ENCODE measurements at regions of chr2 and their contacts with region 1.

Region 1: GRCh38 chr2:64523666-64524603 is at the start of gene AFTPH:
- DNase-seq: peak; percentile 100
- H3K4me3 ChIP-seq: peak within 1 kb of the TSS; percentile 93 to 98 (median 97)
- H3K27ac ChIP-seq: peak within 1 kb of the TSS; percentile 82
- H3K4me1 ChIP-seq: peaks cover 12% of the 10 kb centered on the region
- H3K27me3 ChIP-seq: peaks cover 7 to 8% of the 10 kb centered on the region in 2 experiments
- CTCF ChIP-seq: no peak
- POLR2A ChIP-seq: peak; percentile 46
- total RNA-seq, gene AFTPH: 15.3 and 16.7 TPM in 2 replicates

Region 2: DNA sequence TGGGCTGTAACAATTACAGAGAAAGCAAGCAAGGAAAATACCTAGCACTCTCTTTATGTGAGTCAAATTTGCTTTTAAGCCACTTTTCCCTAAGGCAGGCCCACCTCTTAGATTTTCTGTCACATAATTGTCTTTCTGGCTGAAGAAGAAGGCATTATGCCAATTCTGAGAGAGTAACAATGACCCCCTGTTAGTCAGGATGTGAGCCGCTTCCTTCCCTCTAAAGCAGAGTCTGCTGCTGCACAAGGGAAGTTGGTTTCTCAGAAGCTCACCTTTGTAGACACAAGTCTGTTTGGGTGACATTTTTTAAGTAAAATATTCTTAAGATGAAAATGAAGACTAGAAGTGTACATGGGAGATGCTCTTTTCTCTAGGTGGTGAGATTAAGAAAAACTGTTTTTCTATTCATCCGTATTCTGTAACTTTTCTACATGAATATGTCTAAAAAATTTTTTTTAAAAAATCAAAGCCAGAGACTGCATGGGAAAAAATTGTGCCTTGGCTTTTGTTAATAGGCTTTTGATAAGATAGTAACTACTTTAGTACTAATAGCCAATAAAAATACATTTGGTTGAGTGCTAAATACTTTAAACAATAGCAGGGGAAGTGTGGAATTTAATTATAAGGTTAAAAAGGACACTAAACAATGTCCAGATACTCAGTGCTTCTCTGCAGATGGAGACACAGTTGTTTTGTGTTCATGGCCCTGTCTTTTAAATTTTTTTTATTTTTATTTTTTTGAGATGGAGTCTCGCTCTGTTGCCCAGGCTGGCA is 471.3 kb before region 1 on chr2:
- CTCF ChIA-PET with region 1: interaction called, 10 read pairs
- POLR2A ChIA-PET with region 1: no interaction called
- dilution Hi-C with region 1: no loop called
- intact Hi-C with region 1: loop called (anchors 10 kb)
- DNase-seq: peak; percentile 94
- H3K4me3 ChIP-seq: peak overlapping the region in 1 of 3 experiments; percentile 20
- H3K27ac ChIP-seq: peak overlapping the region; percentile 96
- H3K4me1 ChIP-seq: peaks cover 28% of the 10 kb centered on the region
- H3K27me3 ChIP-seq: no peaks in the 10 kb centered on the region
- CTCF ChIP-seq: no peak
- POLR2A ChIP-seq: no peak

Region 3: GRCh38 chr2:64348386-64349130 is 175.4 kb before region 1 on chr2:
- CTCF ChIA-PET with region 1: no interaction called
- POLR2A ChIA-PET with region 1: no interaction called
- dilution Hi-C with region 1: no loop called
- intact Hi-C with region 1: no loop called
- DNase-seq: no peak
- H3K4me3 ChIP-seq: no peak overlapping the region
- H3K27ac ChIP-seq: no peak overlapping the region
- H3K4me1 ChIP-seq: no peaks in the 10 kb centered on the region
- H3K27me3 ChIP-seq: peaks cover 8 to 11% of the 10 kb centered on the region in 2 experiments
- CTCF ChIP-seq: no peak
- POLR2A ChIP-seq: no peak

Region 4: GRCh38 chr2:64422466-64422865 is 101.5 kb before region 1 on chr2:
- CTCF ChIA-PET with region 1: no interaction called
- POLR2A ChIA-PET with region 1: no interaction called
- dilution Hi-C with region 1: no loop called
- intact Hi-C with region 1: no loop called
- DNase-seq: no peak
- H3K4me3 ChIP-seq: no peak overlapping the region
- H3K27ac ChIP-seq: no peak overlapping the region
- H3K4me1 ChIP-seq: no peaks in the 10 kb centered on the region
- H3K27me3 ChIP-seq: peaks cover 3 to 24% of the 10 kb centered on the region in 2 experiments
- CTCF ChIP-seq: no peak
- POLR2A ChIP-seq: no peak

Region 5: GRCh38 chr2:64453770-64454385 is 70.1 kb before region 1 on chr2 and contains the start of gene LGALSL:
- CTCF ChIA-PET with region 1: interaction called, 4 read pairs
- POLR2A ChIA-PET with region 1: no interaction called
- dilution Hi-C with region 1: no loop called
- intact Hi-C with region 1: loop called (anchors 2 kb)
- DNase-seq: peak; percentile 66
- H3K4me3 ChIP-seq: peak within 1 kb of the TSS; percentile 60 to 93 (median 65)
- H3K27ac ChIP-seq: peak within 1 kb of the TSS; percentile 65
- H3K4me1 ChIP-seq: peaks cover 8% of the 10 kb centered on the region
- H3K27me3 ChIP-seq: peaks cover under 1 to 4% of the 10 kb centered on the region in 2 experiments
- CTCF ChIP-seq: no peak
- POLR2A ChIP-seq: no peak
- total RNA-seq, gene LGALSL: 2.3 and 5.8 TPM in 2 replicates

Region 6: GRCh38 chr2:64501946-64502345 is 22.0 kb before region 1 on chr2:
- CTCF ChIA-PET with region 1: interaction called, 14 read pairs
- POLR2A ChIA-PET with region 1: no interaction called
- dilution Hi-C with region 1: no loop called
- intact Hi-C with region 1: no loop called
- DNase-seq: no peak
- H3K4me3 ChIP-seq: no peak overlapping the region
- H3K27ac ChIP-seq: no peak overlapping the region
- H3K4me1 ChIP-seq: no peaks in the 10 kb centered on the region
- H3K27me3 ChIP-seq: peaks cover 24 to 37% of the 10 kb centered on the region in 2 experiments
- CTCF ChIP-seq: no peak
- POLR2A ChIP-seq: no peak

Region 7: DNA sequence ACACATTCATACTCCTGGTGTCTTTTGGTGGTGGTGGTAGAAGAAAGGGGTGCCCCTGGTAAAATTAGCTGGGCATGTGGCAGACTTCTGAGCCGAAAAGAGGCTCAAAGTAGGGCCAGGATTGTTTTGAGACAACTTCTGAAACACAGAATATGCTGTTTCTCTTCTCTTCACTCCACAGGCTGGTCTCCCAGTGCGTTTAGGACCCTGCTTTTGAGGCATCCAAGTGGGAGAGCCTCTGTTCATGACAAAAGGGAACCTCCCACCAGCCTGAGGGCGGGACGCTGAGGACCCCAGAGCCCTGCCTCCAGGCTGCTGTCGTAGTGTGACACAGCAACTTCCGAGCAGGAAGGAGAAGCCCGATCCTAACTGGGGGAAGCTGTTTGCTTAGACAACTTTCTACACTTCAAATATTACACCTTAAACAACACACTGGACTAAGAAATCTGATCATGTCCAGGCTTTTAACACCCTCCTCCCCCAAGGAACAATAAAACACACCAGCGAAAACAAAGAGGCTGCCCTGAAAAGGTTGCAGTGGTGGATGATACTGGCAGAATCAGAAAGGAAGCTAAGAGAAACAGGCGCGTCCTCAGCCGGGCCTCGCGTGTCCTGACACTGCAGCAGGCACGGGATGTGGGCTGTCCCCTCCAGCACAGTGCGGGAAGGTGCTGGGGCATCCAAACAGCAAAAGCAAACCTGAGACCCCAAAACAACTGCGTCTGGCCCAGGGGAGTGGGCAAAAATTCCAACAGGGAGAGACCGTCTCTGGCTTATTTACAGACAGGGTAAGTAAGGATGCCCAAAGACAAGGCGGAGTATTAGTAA is 120.5 kb after region 1 on chr2:
- CTCF ChIA-PET with region 1: interaction called, 5 read pairs
- POLR2A ChIA-PET with region 1: no interaction called
- dilution Hi-C with region 1: no loop called
- intact Hi-C with region 1: loop called (anchors 1 kb)
- DNase-seq: peak; percentile 84
- H3K4me3 ChIP-seq: peak overlapping the region; percentile 3 to 53 (median 30)
- H3K27ac ChIP-seq: peak overlapping the region; percentile 87
- H3K4me1 ChIP-seq: peaks cover 29% of the 10 kb centered on the region
- H3K27me3 ChIP-seq: no peaks in the 10 kb centered on the region
- CTCF ChIP-seq: no peak
- POLR2A ChIP-seq: no peak

Region 8: GRCh38 chr2:64865073-64865830 is 341.3 kb after region 1 on chr2:
- CTCF ChIA-PET with region 1: interaction called, 11 read pairs
- POLR2A ChIA-PET with region 1: no interaction called
- dilution Hi-C with region 1: no loop called
- intact Hi-C with region 1: loop called (anchors 2 kb)
- DNase-seq: peak; percentile 71
- H3K4me3 ChIP-seq: peak overlapping the region; percentile 42 to 46 (median 44)
- H3K27ac ChIP-seq: peak overlapping the region; percentile 66
- H3K4me1 ChIP-seq: peaks cover 6% of the 10 kb centered on the region
- H3K27me3 ChIP-seq: no peaks in the 10 kb centered on the region
- CTCF ChIP-seq: peak; percentile 43 to 94
- POLR2A ChIP-seq: no peak

Region 9: DNA sequence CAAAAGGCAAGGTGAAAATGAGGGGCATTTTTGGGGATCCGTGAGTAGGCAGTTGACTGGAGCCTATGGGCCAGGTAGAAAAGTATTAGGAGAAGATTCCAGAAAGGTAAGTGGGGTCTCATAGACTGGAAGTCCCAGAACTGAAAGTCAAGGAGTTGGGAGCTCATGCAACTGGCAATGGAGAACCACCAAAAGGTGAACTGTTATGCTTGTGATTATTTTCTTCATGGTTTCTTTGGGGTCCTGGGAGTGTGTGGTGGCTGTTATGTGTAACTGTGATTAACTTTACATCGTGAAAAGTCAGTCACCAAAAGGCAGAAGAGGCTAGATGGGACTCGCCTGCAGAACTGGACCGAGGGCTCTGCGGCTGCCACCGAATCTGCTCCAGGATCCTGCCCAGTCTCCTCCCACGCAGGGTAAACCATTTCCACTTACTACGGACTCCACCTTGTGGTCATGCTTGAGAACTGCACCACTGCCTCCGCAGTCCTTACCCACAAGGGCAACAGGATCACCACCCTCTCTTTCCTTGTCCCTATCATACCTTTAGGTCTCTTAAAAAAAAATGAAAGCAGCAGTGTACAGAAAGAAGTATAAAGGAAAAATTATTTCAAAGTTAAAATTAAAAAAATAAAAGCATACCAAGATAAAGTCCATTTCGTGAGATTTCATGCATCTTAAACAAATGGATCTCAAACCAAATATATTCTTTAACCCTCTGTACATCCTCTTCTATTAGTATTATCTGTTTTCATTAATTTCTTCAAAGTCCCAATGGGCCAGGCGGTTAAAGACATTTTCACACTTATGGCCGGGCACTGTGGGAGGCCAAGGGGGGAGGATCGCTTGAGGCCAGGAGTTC is 516.7 kb after region 1 on chr2:
- CTCF ChIA-PET with region 1: no interaction called
- POLR2A ChIA-PET with region 1: no interaction called
- dilution Hi-C with region 1: no loop called
- intact Hi-C with region 1: loop called (anchors 5 kb)
- DNase-seq: peak; percentile 83
- H3K4me3 ChIP-seq: no peak overlapping the region
- H3K27ac ChIP-seq: no peak overlapping the region
- H3K4me1 ChIP-seq: peaks cover 11% of the 10 kb centered on the region
- H3K27me3 ChIP-seq: no peaks in the 10 kb centered on the region
- CTCF ChIP-seq: peak; percentile 82 to 91
- POLR2A ChIP-seq: no peak